Sciatic nerve (tissue), 2 donors: ENCODE measurements at regions of chr1 and their contacts with region 1.

Region 1: GRCh38 chr1:50959913-50960844 is at the start of gene FAF1:
- DNase-seq: peak; percentile 98
- ATAC-seq: peak; percentile 99
- total RNA-seq, gene FAF1: 54.7 TPM

Region 2: DNA sequence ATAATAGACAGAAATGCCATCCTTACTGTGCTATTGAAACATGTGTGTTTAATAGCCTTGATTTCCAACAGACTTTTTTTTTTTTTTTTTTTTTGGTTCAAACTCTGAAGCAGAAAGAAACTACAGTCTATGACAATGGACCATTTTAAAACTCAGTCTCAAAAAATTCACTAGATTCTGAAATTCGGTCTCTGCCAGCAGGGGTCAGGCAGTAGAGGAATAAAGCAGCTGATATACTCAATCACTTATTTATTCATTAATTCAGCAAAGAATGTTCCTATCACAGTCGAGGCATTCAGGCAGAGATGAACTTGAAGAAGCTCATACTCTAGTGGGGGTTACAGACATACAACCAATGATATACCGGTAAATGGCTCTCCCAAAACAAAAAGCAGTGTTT is 276.0 kb before region 1 on chr1:
- intact Hi-C with region 1: loop called (anchors 5 kb)
- DNase-seq: no peak
- ATAC-seq: no peak

Region 3: GRCh38 chr1:50704126-50704525 is 256.1 kb before region 1 on chr1:
- intact Hi-C with region 1: no loop called
- DNase-seq: no peak
- ATAC-seq: no peak

Region 4: GRCh38 chr1:51235673-51236530 is 275.7 kb after region 1 on chr1 and contains the start of gene RNF11:
- intact Hi-C with region 1: no loop called
- DNase-seq: peak; percentile 97
- ATAC-seq: peak; percentile 98
- total RNA-seq, gene RNF11: 98.6 TPM